ENCODE measurements at regions of chrX and their contacts with region 1.

Region 1: DNA sequence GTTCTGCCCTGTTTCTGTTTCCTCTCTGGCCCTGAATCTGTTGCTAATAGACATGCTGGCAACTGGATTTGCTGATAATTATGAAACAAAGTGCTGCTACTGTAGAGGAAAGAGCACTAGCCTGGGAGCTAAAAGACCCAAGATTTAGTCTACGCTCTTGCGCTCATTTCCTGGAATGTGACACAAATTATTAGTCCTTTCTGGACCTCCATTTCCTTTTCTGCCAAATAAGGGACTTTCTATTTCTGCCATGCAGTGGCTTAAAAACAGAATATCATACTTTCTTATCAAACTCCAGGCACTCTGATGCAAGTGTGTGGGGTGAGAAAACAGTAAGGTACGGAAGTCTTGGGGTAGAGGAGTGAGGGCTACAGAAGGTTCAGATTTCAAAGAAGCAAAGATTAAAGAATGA is 48.3 kb upstream of the GPR174 start:
- DNase-seq: peak in 2 of 9 experiments; percentile 38 to 68
- ATAC-seq: peak; percentile 61
- H3K4me3 ChIP-seq: peak overlapping the region in 1 of 2 experiments; percentile 17
- H3K4me3 Mint-ChIP-seq: peak overlapping the region; percentile 62
- H3K27ac ChIP-seq: peak overlapping the region; percentile 55 to 93
- H3K27ac Mint-ChIP-seq: peak overlapping the region; percentile 91
- H3K4me1 ChIP-seq: peaks cover 32% of the 10 kb centered on the region
- H3K4me1 Mint-ChIP-seq: peaks cover 63% of the 10 kb centered on the region
- H3K27me3 ChIP-seq: no peaks in the 10 kb centered on the region
- H3K27me3 Mint-ChIP-seq: no peaks in the 10 kb centered on the region
- CTCF ChIP-seq: no peak

Region 2: DNA sequence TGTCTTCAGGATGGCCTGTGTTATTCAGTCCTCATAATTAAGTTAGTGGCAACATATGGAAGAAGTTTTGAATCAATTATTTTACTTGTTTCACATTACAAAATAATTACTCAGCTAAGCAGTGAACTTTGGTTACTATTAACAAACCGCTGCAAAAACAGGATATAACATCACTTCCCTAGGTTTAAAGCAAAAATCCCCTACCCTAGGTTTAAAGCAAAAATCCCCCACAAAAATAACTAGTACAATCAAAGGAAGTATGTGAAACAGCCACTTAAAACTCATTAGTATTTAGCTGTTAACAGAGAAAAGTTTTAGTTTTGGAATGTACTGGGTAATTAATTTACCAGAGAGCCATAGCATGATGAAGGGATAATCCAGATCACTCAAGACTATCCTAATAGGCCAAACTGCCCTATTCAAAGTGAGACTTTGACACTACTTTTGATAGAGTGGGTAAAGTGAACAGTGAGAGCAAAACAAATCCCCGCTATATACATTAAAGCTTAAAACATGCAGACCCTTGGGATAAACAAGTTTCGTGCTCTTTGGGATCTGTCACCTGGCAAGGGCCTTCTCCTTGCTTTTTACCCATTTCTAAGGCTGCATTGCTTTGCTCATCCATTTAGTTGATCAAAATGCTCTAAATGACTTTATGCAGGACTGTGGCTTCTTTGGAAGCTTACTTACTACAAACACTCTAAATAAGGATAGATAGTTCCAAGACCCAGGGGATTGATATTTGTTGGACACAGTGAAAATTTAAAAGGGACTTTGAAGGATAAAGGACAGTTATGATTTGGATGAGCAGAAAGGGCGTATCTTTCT is 12.0 kb after region 1 on chrX:
- CTCF ChIA-PET with region 1: interaction called, 4 read pairs
- POLR2A ChIA-PET with region 1: interaction called, 6 read pairs
- intact Hi-C with region 1: loop called (anchors 2 kb)
- DNase-seq: peak in 2 of 9 experiments; percentile 69 to 84
- ATAC-seq: peak; percentile 89
- H3K4me3 ChIP-seq: peak overlapping the region; percentile 15 to 20
- H3K4me3 Mint-ChIP-seq: peak overlapping the region; percentile 68
- H3K27ac ChIP-seq: peak overlapping the region; percentile 80 to 99
- H3K27ac Mint-ChIP-seq: peak overlapping the region; percentile 98
- H3K4me1 ChIP-seq: peaks cover 59% of the 10 kb centered on the region
- H3K4me1 Mint-ChIP-seq: peaks cover 57% of the 10 kb centered on the region
- H3K27me3 ChIP-seq: no peaks in the 10 kb centered on the region
- H3K27me3 Mint-ChIP-seq: no peaks in the 10 kb centered on the region
- CTCF ChIP-seq: no peak

Region 3: GRCh38 chrX:79167462-79167861 is 71.3 kb after region 1 on chrX:
- CTCF ChIA-PET with region 1: no interaction called
- POLR2A ChIA-PET with region 1: no interaction called
- intact Hi-C with region 1: loop called in 1 of 2 experiments (anchors 5 kb)
- DNase-seq: no peak
- ATAC-seq: peak; percentile 26
- H3K4me3 ChIP-seq: peak overlapping the region in 1 of 2 experiments; percentile 20
- H3K4me3 Mint-ChIP-seq: peak overlapping the region; percentile 74
- H3K27ac ChIP-seq: peak overlapping the region; percentile 47 to 80
- H3K27ac Mint-ChIP-seq: peak overlapping the region; percentile 95
- H3K4me1 ChIP-seq: peaks cover 86% of the 10 kb centered on the region
- H3K4me1 Mint-ChIP-seq: peaks cover 89% of the 10 kb centered on the region
- H3K27me3 ChIP-seq: no peaks in the 10 kb centered on the region
- H3K27me3 Mint-ChIP-seq: no peaks in the 10 kb centered on the region
- CTCF ChIP-seq: no peak

Region 4: GRCh38 chrX:79195027-79195426 is 98.9 kb after region 1 on chrX:
- CTCF ChIA-PET with region 1: no interaction called
- POLR2A ChIA-PET with region 1: no interaction called
- intact Hi-C with region 1: no loop called
- DNase-seq: peak in 2 of 9 experiments; percentile 22 to 36
- ATAC-seq: peak; percentile 31
- H3K4me3 ChIP-seq: no peak overlapping the region
- H3K4me3 Mint-ChIP-seq: no peak overlapping the region
- H3K27ac ChIP-seq: no peak overlapping the region
- H3K27ac Mint-ChIP-seq: peak overlapping the region; percentile 22
- H3K4me1 ChIP-seq: no peaks in the 10 kb centered on the region
- H3K4me1 Mint-ChIP-seq: peaks cover 18% of the 10 kb centered on the region
- H3K27me3 ChIP-seq: no peaks in the 10 kb centered on the region
- H3K27me3 Mint-ChIP-seq: no peaks in the 10 kb centered on the region
- CTCF ChIP-seq: no peak

Measured in CD8-positive, alpha-beta T cell (primary cell).